Heart left ventricle (tissue), 16 donors: ENCODE measurements at regions of chr5 and their contacts with region 1.

Region 1: GRCh38 chr5:81751009-81751835 is at the start of gene SSBP2:
- DNase-seq: peak; percentile 99 to 100 (median 99)
- ATAC-seq: peak; percentile 95 to 99 (median 98)
- H3K4me3 ChIP-seq: peak within 1 kb of the TSS; percentile 76 to 98 (median 82)
- H3K27ac ChIP-seq: peak within 1 kb of the TSS; percentile 94 to 100 (median 99)
- H3K4me1 ChIP-seq: peaks cover under 1 to 48% (median 29%) of the 10 kb centered on the region in 12 donors
- H3K27me3 ChIP-seq: no peaks in the 10 kb centered on the region
- CTCF ChIP-seq: peak in 1 of 12 donors; percentile 22
- POLR2A ChIP-seq: peak in 1 of 2 donors; percentile 72
- total RNA-seq, gene SSBP2: 38.6 to 98.1 (median 50.7) TPM

Region 2: GRCh38 chr5:81425569-81425968 is 325.7 kb before region 1 on chr5:
- intact Hi-C with region 1: loop called in 8 of 10 experiments (anchors 5 to 10 kb)
- DNase-seq: no peak
- ATAC-seq: peak in 3 of 4 donors; percentile 35 to 62 (median 59)
- H3K4me3 ChIP-seq: no peak overlapping the region
- H3K27ac ChIP-seq: peak overlapping the region in 4 of 12 donors; percentile 1 to 28 (median 7)
- H3K4me1 ChIP-seq: peaks cover 4 to 26% (median 12%) of the 10 kb centered on the region in 12 donors
- H3K27me3 ChIP-seq: no peaks in the 10 kb centered on the region
- CTCF ChIP-seq: peak; percentile 56 to 82 (median 66)
- POLR2A ChIP-seq: no peak

Region 3: GRCh38 chr5:81650987-81651386 is 100.2 kb before region 1 on chr5:
- intact Hi-C with region 1: no loop called
- DNase-seq: no peak
- ATAC-seq: no peak
- H3K4me3 ChIP-seq: no peak overlapping the region
- H3K27ac ChIP-seq: no peak overlapping the region
- H3K4me1 ChIP-seq: peaks cover 0 to 15% (median 6%) of the 10 kb centered on the region in 12 donors
- H3K27me3 ChIP-seq: no peaks in the 10 kb centered on the region
- CTCF ChIP-seq: no peak
- POLR2A ChIP-seq: no peak

Region 4: GRCh38 chr5:81696418-81697397 is 54.5 kb before region 1 on chr5:
- intact Hi-C with region 1: no loop called
- DNase-seq: no peak
- ATAC-seq: no peak
- H3K4me3 ChIP-seq: no peak overlapping the region
- H3K27ac ChIP-seq: no peak overlapping the region
- H3K4me1 ChIP-seq: peaks cover 0 to 7% (median 0%) of the 10 kb centered on the region in 12 donors
- H3K27me3 ChIP-seq: no peaks in the 10 kb centered on the region
- CTCF ChIP-seq: no peak
- POLR2A ChIP-seq: no peak

Region 5: DNA sequence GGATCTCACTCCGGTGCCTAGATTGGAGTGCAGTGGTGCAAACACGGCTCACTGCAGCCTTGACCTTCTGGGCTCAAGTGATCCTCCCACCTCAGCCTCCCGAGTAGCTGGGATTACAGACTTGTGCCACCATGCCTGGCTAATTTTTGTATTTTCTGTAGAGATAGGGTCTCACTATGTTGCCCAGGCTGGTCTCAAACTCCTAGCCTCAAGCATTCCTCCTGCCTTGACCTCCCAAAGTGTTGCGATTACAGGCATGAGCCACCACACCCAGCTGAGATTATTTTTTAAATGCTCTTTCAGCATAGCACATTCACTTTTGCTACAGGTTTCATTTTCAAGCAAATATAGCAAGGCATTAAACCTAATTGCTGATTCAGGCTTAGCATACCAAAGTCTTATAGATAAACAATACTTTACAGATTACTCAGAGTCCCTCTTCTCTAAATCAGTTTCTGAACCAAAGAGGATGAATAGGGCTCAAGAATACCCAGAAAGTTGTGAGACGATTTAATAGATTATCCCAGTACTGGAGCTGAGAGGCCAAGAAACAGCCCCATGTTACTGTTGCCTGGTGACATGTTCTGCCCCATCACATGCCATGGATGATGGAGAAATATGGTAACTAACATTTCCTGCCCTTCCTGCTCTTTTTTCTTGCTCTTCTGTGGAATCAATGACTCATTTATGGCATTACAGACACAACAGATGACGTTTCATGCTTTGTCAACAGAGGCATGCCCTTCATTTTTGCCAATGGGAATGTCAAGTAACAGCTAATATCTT is 17.6 kb after region 1 on chr5:
- intact Hi-C with region 1: loop called in 1 of 10 experiments (anchors 2 kb)
- DNase-seq: no peak
- ATAC-seq: no peak
- H3K4me3 ChIP-seq: no peak overlapping the region
- H3K27ac ChIP-seq: no peak overlapping the region
- H3K4me1 ChIP-seq: peaks cover 0 to 11% (median 3%) of the 10 kb centered on the region in 12 donors
- H3K27me3 ChIP-seq: no peaks in the 10 kb centered on the region
- CTCF ChIP-seq: no peak
- POLR2A ChIP-seq: no peak

Region 6: GRCh38 chr5:81787474-81788242 is 36.4 kb after region 1 on chr5:
- intact Hi-C with region 1: loop called in 9 of 10 experiments (anchors 1 to 5 kb)
- DNase-seq: peak in 4 of 5 donors; percentile 53 to 78 (median 66)
- ATAC-seq: peak; percentile 60 to 72 (median 63)
- H3K4me3 ChIP-seq: peak overlapping the region in 3 of 12 donors; percentile 4 to 30 (median 20)
- H3K27ac ChIP-seq: peak overlapping the region in 9 of 12 donors; percentile 11 to 42 (median 21)
- H3K4me1 ChIP-seq: peaks cover 0 to 30% (median 19%) of the 10 kb centered on the region in 12 donors
- H3K27me3 ChIP-seq: no peaks in the 10 kb centered on the region
- CTCF ChIP-seq: no peak
- POLR2A ChIP-seq: no peak

Region 7: GRCh38 chr5:81971712-81972495 is 220.7 kb after region 1 on chr5 and contains the start of gene ATG10:
- intact Hi-C with region 1: loop called (anchors 2 to 10 kb)
- DNase-seq: peak; percentile 93 to 97 (median 94)
- ATAC-seq: peak; percentile 96 to 100 (median 99)
- H3K4me3 ChIP-seq: peak within 1 kb of the TSS; percentile 57 to 92 (median 73)
- H3K27ac ChIP-seq: peak within 1 kb of the TSS; percentile 91 to 100 (median 98)
- H3K4me1 ChIP-seq: peaks cover 0 to 15% (median 6%) of the 10 kb centered on the region in 12 donors
- H3K27me3 ChIP-seq: no peaks in the 10 kb centered on the region
- CTCF ChIP-seq: no peak
- POLR2A ChIP-seq: peak; percentile 70 to 98
- total RNA-seq, gene ATG10: 2.7 to 10.7 (median 6.3) TPM